Activated CD4-positive, alpha-beta T cell treated with anti-CD3 and anti-CD28 coated beads, Interleukin-2, amount 10 ng/mL, durations not matched to agents 24 days and 14 days (primary cell): ENCODE measurements at regions of chr20 and their contacts with region 1.

Region 1: GRCh38 chr20:45064812-45065211 is 36.1 kb downstream of the KCNS1 start:
- DNase-seq: no peak
- H3K4me3 Mint-ChIP-seq: no peak overlapping the region
- H3K27ac Mint-ChIP-seq: peak overlapping the region; percentile 35
- H3K4me1 Mint-ChIP-seq: peaks cover 30% of the 10 kb centered on the region
- H3K27me3 Mint-ChIP-seq: no peaks in the 10 kb centered on the region

Region 2: DNA sequence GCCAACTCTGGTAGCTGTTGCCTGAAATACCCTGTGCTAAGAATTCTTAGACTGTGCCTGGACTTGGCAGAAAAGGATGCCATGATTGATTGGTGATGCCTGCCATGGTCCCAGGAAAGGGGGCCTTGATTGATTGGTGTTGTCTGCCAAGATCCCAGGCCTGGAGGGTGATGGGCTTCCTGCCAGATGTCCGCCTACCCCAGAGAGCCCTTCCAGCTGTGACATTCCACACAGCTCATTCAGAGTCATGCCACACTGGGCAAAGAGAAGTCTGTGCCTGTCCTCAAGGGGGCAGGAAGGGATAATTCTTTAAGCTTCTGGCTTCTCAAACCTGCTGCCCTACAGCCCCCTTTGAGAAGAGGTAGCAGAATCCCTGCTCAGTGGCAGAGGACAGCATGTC is 279.0 kb before region 1 on chr20:
- intact Hi-C with region 1: no loop called
- DNase-seq: no peak
- H3K4me3 Mint-ChIP-seq: no peak overlapping the region
- H3K27ac Mint-ChIP-seq: no peak overlapping the region
- H3K4me1 Mint-ChIP-seq: no peaks in the 10 kb centered on the region
- H3K27me3 Mint-ChIP-seq: peaks cover 4% of the 10 kb centered on the region

Region 3: DNA sequence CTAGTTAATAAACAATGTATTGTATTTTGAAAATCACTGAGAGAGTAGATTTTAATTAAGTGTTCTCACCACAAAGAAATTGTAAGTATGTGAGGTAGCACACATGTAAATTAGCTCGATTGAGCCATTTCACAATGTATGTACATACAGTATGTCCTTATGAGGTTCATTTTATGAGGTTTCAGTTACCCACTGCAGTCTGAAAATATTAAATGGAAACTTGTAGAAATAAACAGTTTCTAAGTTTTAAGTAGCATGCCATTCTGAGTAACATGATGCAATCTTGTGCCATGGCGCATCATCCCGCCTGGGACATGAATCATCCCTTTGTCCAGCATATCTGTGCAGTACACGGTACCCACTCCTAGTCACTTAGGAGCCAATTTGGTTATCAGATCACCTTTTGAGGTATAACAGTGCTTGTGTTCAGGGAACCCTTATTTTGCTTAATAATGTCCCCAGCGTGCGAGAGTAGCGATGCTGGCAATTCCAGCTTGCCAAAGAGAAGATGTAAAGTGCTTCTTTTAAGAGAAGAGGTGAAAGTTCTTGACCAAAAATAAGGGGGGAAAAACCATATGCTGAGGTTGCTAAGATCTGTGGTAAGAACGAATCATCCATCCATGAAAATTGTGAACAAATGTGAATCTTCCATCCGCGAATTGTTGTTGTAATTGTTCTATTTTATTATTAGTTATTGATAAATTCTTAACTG is 28.6 kb before region 1 on chr20:
- intact Hi-C with region 1: no loop called
- DNase-seq: no peak
- H3K4me3 Mint-ChIP-seq: no peak overlapping the region
- H3K27ac Mint-ChIP-seq: peak overlapping the region; percentile 80
- H3K4me1 Mint-ChIP-seq: peaks cover 42% of the 10 kb centered on the region
- H3K27me3 Mint-ChIP-seq: no peaks in the 10 kb centered on the region

Region 4: DNA sequence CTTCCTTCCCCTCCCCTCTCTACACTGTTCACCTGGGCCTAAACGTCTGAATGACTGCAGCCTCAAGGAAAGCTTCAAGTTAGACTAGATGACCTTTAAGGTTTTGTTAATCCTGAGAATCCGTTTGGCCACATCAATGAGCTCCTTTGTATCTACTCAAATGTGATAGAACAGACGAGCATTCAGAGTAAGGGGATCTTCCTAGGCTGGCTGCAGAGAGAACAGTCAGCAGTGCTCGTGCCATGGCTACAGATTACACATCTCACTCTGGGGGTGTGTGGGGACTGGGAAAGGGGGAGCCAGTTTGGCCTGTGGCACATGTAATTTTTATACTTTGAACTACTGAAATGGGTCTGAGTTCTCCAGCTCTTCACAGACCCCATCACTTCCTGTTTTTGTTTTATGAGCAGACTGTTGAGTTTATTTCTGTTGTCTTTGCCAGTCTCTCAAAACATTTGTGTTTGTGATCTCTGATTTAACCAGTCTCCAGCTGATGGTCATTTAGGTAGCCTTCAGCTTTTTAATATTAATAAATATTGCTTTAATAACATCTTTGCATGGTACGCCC is 14.8 kb before region 1 on chr20:
- intact Hi-C with region 1: loop called (anchors 2 kb)
- DNase-seq: peak; percentile 69
- H3K4me3 Mint-ChIP-seq: peak overlapping the region; percentile 66
- H3K27ac Mint-ChIP-seq: peak overlapping the region; percentile 86
- H3K4me1 Mint-ChIP-seq: peaks cover 49% of the 10 kb centered on the region
- H3K27me3 Mint-ChIP-seq: no peaks in the 10 kb centered on the region